Gastrocnemius medialis (tissue), 4 donors: ENCODE measurements at regions of chrX and their contacts with region 1.

Region 1: DNA sequence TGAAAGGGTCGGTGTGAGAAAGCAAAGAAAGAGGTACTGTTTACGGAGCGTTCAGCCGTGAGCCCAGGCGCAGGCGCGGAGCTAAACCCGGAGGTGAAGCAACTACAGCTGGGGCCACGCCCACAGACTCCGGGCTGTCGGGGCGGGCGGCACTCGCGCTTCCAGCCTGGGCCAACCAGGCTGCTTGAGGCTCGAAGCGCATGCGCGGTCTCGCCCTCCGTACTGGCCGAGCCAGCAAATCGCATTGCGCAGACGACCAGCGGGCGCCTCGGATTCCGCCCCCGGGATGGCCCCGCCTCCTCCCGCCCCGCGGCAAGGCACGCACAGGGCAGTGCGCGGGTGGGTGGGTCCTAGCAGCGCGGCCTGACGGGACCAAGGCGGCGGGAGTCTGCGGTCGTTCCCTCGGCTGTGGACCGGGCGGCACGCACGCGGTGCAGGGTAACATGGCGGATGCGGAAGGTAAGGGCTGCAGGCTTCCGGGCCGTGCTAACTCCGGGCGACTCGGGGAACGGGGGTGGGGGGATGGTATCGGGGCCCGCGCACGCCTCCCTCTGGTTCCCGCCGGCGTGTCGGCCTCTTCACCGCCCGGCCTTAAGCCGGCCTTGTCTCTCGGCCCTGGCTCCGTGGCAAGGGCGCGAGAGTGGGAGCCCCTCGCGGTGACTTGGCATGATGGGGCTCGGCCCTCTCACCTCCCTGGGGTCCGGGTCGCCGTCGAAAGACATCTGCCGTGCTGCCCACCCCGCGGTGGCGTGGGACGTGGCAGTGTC is at the start of gene DKC1:
- DNase-seq: peak; percentile 91 to 93
- ATAC-seq: peak; percentile 92 to 96
- H3K4me3 ChIP-seq: peak within 1 kb of the TSS; percentile 66 to 77 (median 76)
- H3K27ac ChIP-seq: peak within 1 kb of the TSS; percentile 79 to 88 (median 82)
- H3K4me1 ChIP-seq: peaks cover 0 to 10% of the 10 kb centered on the region in 2 donors
- H3K27me3 ChIP-seq: no peaks in the 10 kb centered on the region
- CTCF ChIP-seq: peak in 1 of 5 experiments; percentile 22
- POLR2A ChIP-seq: peak; percentile 55 to 57
- total RNA-seq, gene DKC1: 17.8 to 34.1 (median 21.7) TPM

Region 2: GRCh38 chrX:154547245-154548027 is 215.3 kb before region 1 on chrX and contains the start of gene IKBKG:
- in situ Hi-C with region 1: no loop called
- intact Hi-C with region 1: loop called (anchors 10 kb)
- DNase-seq: peak; percentile 80 to 87
- ATAC-seq: peak; percentile 85 to 87
- H3K4me3 ChIP-seq: peak within 1 kb of the TSS; percentile 61 to 77 (median 69)
- H3K27ac ChIP-seq: peak within 1 kb of the TSS; percentile 84 to 96 (median 92)
- H3K4me1 ChIP-seq: peaks cover 6 to 24% of the 10 kb centered on the region in 2 donors
- H3K27me3 ChIP-seq: no peaks in the 10 kb centered on the region
- CTCF ChIP-seq: no peak
- POLR2A ChIP-seq: peak in 1 of 2 donors; percentile 40
- total RNA-seq, gene IKBKG: 8.8 to 17.5 (median 11.6) TPM

Region 3: DNA sequence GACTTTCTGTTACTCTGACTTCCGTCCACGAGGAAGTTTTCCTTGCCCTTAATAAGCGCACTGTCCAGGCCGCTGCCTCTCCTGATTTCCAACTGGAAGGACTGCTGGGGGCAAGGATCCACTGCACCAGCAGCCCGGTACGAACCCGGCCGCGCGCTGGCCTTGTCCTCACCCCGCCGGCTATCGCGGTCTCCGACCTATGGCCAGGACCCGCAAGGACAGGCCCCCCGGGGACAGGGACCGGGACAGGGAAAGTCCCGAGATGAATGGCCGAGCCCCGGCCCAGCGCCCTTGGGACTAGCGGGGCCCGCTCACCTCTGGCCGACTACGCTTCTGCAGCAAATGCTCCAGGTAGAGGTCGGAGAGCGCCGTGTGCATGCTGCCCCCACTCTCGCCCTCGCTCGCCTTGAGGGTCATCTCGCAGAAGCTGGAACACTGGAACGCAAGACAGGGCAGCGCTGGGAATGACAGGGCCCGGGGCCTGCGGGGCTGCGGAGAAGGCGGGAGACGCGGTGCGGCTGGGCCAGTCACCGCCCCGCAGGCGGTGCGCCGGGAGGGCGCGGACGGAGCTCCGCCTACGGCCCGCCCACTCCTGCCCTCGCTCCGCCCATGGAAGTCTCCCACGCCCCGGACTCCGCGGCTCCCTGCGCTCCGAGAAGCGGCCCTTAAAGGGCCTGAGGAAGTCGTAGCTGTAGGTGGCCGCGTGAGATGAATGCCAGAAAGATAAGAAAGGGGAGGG is 42.4 kb after region 1 on chrX and contains the start of gene MPP1:
- in situ Hi-C with region 1: no loop called
- intact Hi-C with region 1: loop called (anchors 2 kb)
- DNase-seq: peak; percentile 41 to 64
- ATAC-seq: peak; percentile 87 to 88
- H3K4me3 ChIP-seq: peak within 1 kb of the TSS; percentile 68 to 92 (median 69)
- H3K27ac ChIP-seq: peak within 1 kb of the TSS; percentile 61 to 83 (median 80)
- H3K4me1 ChIP-seq: peaks cover 0 to 12% of the 10 kb centered on the region in 2 donors
- H3K27me3 ChIP-seq: no peaks in the 10 kb centered on the region
- CTCF ChIP-seq: no peak
- POLR2A ChIP-seq: peak in 1 of 2 donors; percentile 41
- total RNA-seq, gene MPP1: 11.3 to 19.9 (median 15.9) TPM

Region 4: DNA sequence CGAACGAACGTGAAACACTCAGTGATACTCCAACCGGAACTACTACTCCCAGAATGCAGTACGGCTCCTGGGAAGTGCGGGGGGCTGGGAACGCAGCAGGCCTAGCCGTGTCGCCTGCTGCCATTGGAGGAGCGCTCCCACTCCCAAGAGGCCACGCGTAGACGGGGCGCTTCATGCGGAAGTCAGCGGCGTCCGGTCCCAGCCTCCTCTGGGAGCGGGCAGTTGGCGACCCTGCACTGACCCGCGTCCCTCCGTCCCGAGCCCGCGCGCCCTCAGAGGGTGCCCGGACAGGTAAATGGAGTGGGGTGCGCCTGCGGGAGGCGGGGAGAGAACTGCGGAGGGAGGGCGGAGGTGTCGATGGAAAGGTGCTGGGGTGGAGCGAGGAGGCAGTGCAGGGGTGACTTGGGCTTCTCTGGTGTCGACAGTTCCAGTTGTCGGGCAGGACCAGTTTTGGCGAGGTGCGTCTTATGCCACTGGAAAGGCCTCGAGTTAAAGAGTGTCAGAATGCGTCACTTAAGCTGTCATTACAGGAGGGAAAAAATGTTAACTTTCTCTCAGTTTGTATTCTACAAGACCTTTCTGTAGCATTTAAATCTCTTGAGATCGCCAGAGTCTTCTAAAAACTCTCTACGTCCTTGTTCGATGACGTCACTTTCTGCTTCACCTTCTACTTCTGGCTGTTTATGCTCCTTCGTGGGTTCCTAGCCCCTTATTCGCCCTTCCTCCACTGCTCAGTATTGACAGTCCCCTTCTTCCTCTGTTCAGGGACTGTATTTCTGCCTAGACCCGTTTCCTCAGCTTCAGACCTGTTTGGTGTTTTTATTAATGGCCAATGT is 1118.7 kb after region 1 on chrX and contains the start of gene VAMP7:
- in situ Hi-C with region 1: no loop called
- intact Hi-C with region 1: loop called (anchors 5 kb)
- DNase-seq: peak; percentile 78 to 82
- ATAC-seq: peak; percentile 95 to 96
- H3K4me3 ChIP-seq: peak within 1 kb of the TSS; percentile 64 to 81 (median 71)
- H3K27ac ChIP-seq: peak within 1 kb of the TSS; percentile 76 to 92 (median 84)
- H3K4me1 ChIP-seq: peaks cover 3 to 9% of the 10 kb centered on the region in 2 donors
- H3K27me3 ChIP-seq: no peaks in the 10 kb centered on the region
- CTCF ChIP-seq: no peak
- POLR2A ChIP-seq: peak; percentile 79 to 89
- total RNA-seq, gene VAMP7: 21.6 to 41.4 (median 32.2) TPM